Heart left ventricle (tissue), 16 donors: ENCODE measurements at regions of chr6 and their contacts with region 1.

Region 1: GRCh38 chr6:163180874-163181541 is 233.5 kb upstream of the QKI start:
- DNase-seq: peak; percentile 80 to 87 (median 84)
- ATAC-seq: peak; percentile 93 to 97 (median 96)
- H3K4me3 ChIP-seq: peak overlapping the region in 6 of 12 donors; percentile 13 to 33 (median 16)
- H3K27ac ChIP-seq: peak overlapping the region in 5 of 12 donors; percentile 28 to 56 (median 40)
- H3K4me1 ChIP-seq: peaks cover 0 to 29% (median 13%) of the 10 kb centered on the region in 12 donors
- H3K27me3 ChIP-seq: no peaks in the 10 kb centered on the region
- CTCF ChIP-seq: peak; percentile 75 to 94 (median 90)
- POLR2A ChIP-seq: no peak

Region 2: DNA sequence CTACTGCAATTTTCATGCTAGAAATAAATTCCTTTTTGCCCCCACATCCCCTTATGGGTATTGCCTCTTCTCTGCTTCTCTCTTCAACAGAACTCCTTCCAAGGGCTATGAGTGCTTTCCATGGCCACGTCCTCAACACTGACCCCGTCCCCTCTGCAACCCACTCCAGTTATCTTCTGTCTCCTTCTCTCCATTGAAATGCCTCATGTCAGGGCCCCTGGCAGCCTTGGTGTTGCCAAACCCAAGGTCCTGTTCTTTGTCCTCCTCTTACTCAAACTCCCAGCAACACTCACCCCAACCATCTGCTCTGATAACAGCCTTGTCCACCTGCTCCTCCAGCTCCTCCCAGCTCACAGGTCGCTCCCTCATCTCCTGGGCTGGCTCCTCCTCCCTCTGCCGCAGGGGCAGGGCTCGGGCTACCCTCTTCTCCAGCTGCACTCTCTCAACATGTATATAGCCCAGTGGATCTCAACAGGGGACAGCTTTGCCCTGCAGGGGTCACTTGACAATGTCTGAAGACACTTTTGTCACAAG is 37.4 kb after region 1 on chr6:
- intact Hi-C with region 1: no loop called
- DNase-seq: no peak
- ATAC-seq: peak in 3 of 4 donors; percentile 9 to 67 (median 22)
- H3K4me3 ChIP-seq: no peak overlapping the region
- H3K27ac ChIP-seq: no peak overlapping the region
- H3K4me1 ChIP-seq: peaks cover 0 to 47% (median 5%) of the 10 kb centered on the region in 12 donors
- H3K27me3 ChIP-seq: no peaks in the 10 kb centered on the region
- CTCF ChIP-seq: no peak
- POLR2A ChIP-seq: no peak

Region 3: GRCh38 chr6:163338671-163339405 is 157.8 kb after region 1 on chr6:
- intact Hi-C with region 1: loop called in 3 of 10 experiments (anchors 5 to 10 kb)
- DNase-seq: peak; percentile 66 to 74 (median 70)
- ATAC-seq: peak; percentile 62 to 73 (median 68)
- H3K4me3 ChIP-seq: no peak overlapping the region
- H3K27ac ChIP-seq: peak overlapping the region; percentile 71 to 97 (median 90)
- H3K4me1 ChIP-seq: peaks cover 10 to 74% (median 59%) of the 10 kb centered on the region in 12 donors
- H3K27me3 ChIP-seq: no peaks in the 10 kb centered on the region
- CTCF ChIP-seq: no peak
- POLR2A ChIP-seq: no peak

Region 4: GRCh38 chr6:163413345-163414116 is 232.5 kb after region 1 on chr6:
- intact Hi-C with region 1: loop called (anchors 2 to 10 kb)
- DNase-seq: peak; percentile 90 to 95 (median 93)
- ATAC-seq: peak; percentile 71 to 93 (median 90)
- H3K4me3 ChIP-seq: peak overlapping the region; percentile 69 to 93 (median 78)
- H3K27ac ChIP-seq: peak overlapping the region; percentile 95 to 100 (median 99)
- H3K4me1 ChIP-seq: peaks cover 0 to 26% (median 6%) of the 10 kb centered on the region in 12 donors
- H3K27me3 ChIP-seq: no peaks in the 10 kb centered on the region
- CTCF ChIP-seq: no peak
- POLR2A ChIP-seq: peak in 1 of 2 donors; percentile 83

Region 5: DNA sequence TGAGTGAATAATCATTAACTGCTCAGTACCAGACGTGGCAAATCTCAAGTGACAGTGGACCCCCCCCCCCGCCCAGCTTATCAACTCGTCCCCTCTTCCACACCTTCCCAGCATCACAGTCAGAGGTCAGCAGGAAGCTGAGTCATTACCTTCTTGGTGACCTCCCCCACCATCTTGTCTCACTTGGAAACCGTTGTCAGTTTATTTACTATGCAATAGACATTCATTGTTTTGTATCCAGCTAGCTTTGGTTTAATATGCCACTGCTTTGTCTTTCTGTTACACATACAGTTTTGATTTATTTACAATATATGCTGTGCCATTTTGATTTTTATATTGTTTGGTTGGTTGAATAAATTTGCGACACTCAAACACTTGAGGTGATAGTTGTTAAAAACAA is 391.6 kb after region 1 on chr6:
- intact Hi-C with region 1: loop called in 2 of 10 experiments (anchors 5 to 10 kb)
- DNase-seq: no peak
- ATAC-seq: peak in 3 of 4 donors; percentile 45 to 73 (median 53)
- H3K4me3 ChIP-seq: no peak overlapping the region
- H3K27ac ChIP-seq: peak overlapping the region in 2 of 12 donors; percentile 11 to 16
- H3K4me1 ChIP-seq: peaks cover 0 to 52% (median 4%) of the 10 kb centered on the region in 12 donors
- H3K27me3 ChIP-seq: no peaks in the 10 kb centered on the region
- CTCF ChIP-seq: no peak
- POLR2A ChIP-seq: no peak

Region 6: DNA sequence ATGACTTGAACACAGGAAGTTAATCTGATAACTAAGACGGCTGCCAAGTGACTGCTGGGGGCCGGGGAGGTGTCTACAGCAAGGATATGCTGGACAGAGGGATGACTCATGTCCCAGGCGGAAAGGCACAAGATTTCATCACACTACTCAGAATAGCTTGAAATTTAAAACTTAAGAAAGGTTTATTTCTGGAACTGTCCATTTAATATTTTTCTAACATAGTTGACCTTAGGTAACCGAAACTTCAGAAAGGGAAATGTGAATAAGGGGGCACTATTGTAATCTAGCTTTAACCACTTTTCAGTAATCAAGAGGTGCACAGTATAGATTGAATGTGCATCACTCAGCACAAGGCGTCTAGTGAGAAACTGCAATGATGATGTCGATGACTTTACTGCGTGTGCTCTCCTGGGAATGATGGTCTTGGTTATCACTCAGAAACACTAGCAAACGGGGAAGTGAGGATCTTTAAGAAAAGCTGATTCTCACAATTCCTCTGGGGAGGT is 405.0 kb after region 1 on chr6:
- intact Hi-C with region 1: loop called in 2 of 10 experiments (anchors 10 kb)
- DNase-seq: peak; percentile 54 to 82 (median 72)
- ATAC-seq: peak; percentile 47 to 88 (median 82)
- H3K4me3 ChIP-seq: peak overlapping the region in 1 of 12 donors; percentile 15
- H3K27ac ChIP-seq: peak overlapping the region in 9 of 12 donors; percentile 12 to 64 (median 39)
- H3K4me1 ChIP-seq: peaks cover 2 to 42% (median 19%) of the 10 kb centered on the region in 12 donors
- H3K27me3 ChIP-seq: no peaks in the 10 kb centered on the region
- CTCF ChIP-seq: no peak
- POLR2A ChIP-seq: no peak

Region 7: DNA sequence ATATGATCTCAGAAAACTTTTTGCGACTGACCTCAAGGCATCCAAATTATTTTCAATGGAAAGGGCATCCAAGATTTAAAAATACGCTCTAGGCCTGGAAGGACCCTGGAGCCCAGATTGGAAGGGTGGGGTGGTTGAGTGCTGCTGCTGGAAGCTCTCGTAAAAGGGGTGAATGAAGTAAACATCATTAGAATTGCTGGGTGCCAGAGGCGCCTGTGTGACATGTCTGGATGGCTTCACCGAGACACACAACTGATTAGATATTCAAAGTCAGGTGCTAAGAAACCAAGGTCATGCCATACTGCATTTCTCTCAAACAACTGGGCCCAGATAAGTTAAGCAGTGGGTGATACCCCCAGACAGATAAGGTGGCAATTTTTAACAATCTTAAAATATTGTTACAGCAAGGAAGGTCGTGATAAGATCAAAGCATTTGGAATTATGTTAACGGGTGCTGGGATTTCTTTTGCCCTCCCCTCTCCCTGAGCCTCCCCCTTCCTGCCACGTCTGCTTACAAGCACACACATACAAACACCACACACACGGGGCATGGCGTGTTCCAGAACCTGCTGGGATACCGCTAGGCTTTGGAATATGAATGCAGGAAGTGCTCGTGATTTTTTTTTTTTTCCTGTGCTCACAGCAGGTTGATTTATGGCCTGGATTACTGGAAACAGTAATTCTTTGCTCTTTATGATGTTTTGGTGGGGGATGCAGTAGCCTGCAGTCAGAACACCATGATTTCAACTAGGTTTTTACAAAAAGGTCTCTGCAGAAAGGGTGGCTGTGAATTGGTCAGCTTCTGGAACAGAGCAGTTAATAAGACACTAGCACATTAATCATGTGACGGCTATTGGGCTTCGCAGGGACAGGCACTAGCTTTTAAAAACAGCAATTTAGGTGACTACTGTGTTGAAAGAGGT is 784.7 kb after region 1 on chr6:
- intact Hi-C with region 1: loop called in 1 of 10 experiments (anchors 10 kb)
- DNase-seq: peak in 3 of 5 donors; percentile 59 to 74 (median 61)
- ATAC-seq: peak; percentile 47 to 66 (median 54)
- H3K4me3 ChIP-seq: no peak overlapping the region
- H3K27ac ChIP-seq: peak overlapping the region; percentile 77 to 98 (median 90)
- H3K4me1 ChIP-seq: peaks cover 0 to 50% (median 17%) of the 10 kb centered on the region in 12 donors
- H3K27me3 ChIP-seq: no peaks in the 10 kb centered on the region
- CTCF ChIP-seq: no peak
- POLR2A ChIP-seq: no peak